CD4-positive, alpha-beta memory T cell (primary cell): ENCODE measurements at regions of chr19 and their contacts with region 1.

Region 1: GRCh38 chr19:17932485-17933338 is at the start of gene CCDC124:
- DNase-seq: peak; percentile 93 to 95 (median 95)
- H3K4me3 ChIP-seq: peak within 1 kb of the TSS; percentile 63 to 73
- H3K4me3 Mint-ChIP-seq: peak within 1 kb of the TSS; percentile 89 to 98 (median 92)
- H3K27ac ChIP-seq: peak within 1 kb of the TSS; percentile 96
- H3K27ac Mint-ChIP-seq: peak within 1 kb of the TSS; percentile 92 to 99 (median 98)
- H3K4me1 ChIP-seq: peaks cover 19% of the 10 kb centered on the region
- H3K4me1 Mint-ChIP-seq: peaks cover 7 to 24% (median 14%) of the 10 kb centered on the region in 4 donors
- H3K27me3 ChIP-seq: no peaks in the 10 kb centered on the region
- H3K27me3 Mint-ChIP-seq: no peaks in the 10 kb centered on the region
- total RNA-seq, gene CCDC124: 30.0 to 34.2 TPM

Region 2: DNA sequence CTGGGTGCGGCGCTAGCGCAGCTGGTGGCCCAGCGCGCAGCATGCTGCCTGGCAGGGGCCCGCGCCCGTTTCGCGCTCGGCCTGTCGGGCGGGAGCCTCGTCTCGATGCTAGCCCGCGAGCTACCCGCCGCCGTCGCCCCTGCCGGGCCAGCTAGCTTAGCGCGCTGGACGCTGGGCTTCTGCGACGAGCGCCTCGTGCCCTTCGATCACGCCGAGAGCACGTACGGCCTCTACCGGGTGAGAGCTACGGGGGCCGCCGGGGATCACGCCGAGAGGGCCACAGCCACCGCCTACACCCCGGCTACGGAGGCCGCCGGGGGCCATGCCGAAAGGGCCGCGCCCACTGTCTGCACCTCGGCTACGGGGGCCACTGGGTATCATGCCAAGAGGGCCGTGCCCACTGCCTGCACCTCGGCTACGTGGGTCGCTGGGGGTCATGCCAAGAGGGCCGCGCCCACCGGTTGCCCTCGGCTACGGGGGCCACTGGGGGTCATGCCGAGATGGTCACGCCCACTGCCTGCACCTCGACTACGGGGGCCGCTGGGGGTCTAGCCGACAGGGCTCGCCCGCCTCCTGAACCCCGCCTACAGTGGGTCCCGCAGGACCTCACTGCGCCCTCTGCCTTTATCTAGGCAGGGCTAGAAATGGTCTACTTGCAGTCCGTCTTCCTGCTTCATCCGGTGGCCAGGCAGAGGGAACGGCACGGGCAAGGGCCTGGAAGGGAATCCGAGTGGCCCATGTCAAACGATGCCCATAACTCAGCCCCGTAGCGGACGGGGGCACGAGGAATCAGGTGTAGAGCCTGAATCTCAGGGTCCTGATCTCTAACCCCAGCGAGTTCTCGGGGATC is 420.8 kb before region 1 on chr19:
- CTCF ChIA-PET with region 1: no interaction called
- POLR2A ChIA-PET with region 1: no interaction called
- intact Hi-C with region 1: loop called (anchors 5 kb)
- DNase-seq: peak; percentile 86 to 90 (median 88)
- H3K4me3 ChIP-seq: peak overlapping the region; percentile 50 to 96
- H3K4me3 Mint-ChIP-seq: peak overlapping the region; percentile 88 to 100 (median 98)
- H3K27ac ChIP-seq: peak overlapping the region; percentile 92
- H3K27ac Mint-ChIP-seq: peak overlapping the region; percentile 90 to 98 (median 95)
- H3K4me1 ChIP-seq: peaks cover 20% of the 10 kb centered on the region
- H3K4me1 Mint-ChIP-seq: peaks cover 17 to 47% (median 30%) of the 10 kb centered on the region in 4 donors
- H3K27me3 ChIP-seq: no peaks in the 10 kb centered on the region
- H3K27me3 Mint-ChIP-seq: no peaks in the 10 kb centered on the region

Region 3: GRCh38 chr19:17703824-17704463 is 228.8 kb before region 1 on chr19:
- CTCF ChIA-PET with region 1: interaction called, 10 read pairs
- POLR2A ChIA-PET with region 1: no interaction called
- intact Hi-C with region 1: no loop called
- DNase-seq: peak; percentile 62 to 71 (median 66)
- H3K4me3 ChIP-seq: no peak overlapping the region
- H3K4me3 Mint-ChIP-seq: no peak overlapping the region
- H3K27ac ChIP-seq: no peak overlapping the region
- H3K27ac Mint-ChIP-seq: peak overlapping the region in 2 of 7 donors; percentile 5 to 78
- H3K4me1 ChIP-seq: no peaks in the 10 kb centered on the region
- H3K4me1 Mint-ChIP-seq: peaks cover 0 to 2% (median 0%) of the 10 kb centered on the region in 4 donors
- H3K27me3 ChIP-seq: no peaks in the 10 kb centered on the region
- H3K27me3 Mint-ChIP-seq: peaks cover 3 to 10% of the 10 kb centered on the region in 2 donors

Region 4: GRCh38 chr19:17803264-17803922 is 129.3 kb before region 1 on chr19:
- CTCF ChIA-PET with region 1: interaction called, 3 read pairs
- POLR2A ChIA-PET with region 1: interaction called, 12 read pairs
- intact Hi-C with region 1: no loop called
- DNase-seq: peak; percentile 47 to 63 (median 57)
- H3K4me3 ChIP-seq: peak overlapping the region in 1 of 2 donors; percentile 28
- H3K4me3 Mint-ChIP-seq: peak overlapping the region; percentile 34 to 86 (median 78)
- H3K27ac ChIP-seq: no peak overlapping the region
- H3K27ac Mint-ChIP-seq: peak overlapping the region; percentile 80 to 94 (median 88)
- H3K4me1 ChIP-seq: peaks cover 43% of the 10 kb centered on the region
- H3K4me1 Mint-ChIP-seq: peaks cover 19 to 52% (median 32%) of the 10 kb centered on the region in 4 donors
- H3K27me3 ChIP-seq: no peaks in the 10 kb centered on the region
- H3K27me3 Mint-ChIP-seq: no peaks in the 10 kb centered on the region

Region 5: GRCh38 chr19:17847538-17848366 is 85.0 kb before region 1 on chr19 and contains the start of gene JAK3:
- CTCF ChIA-PET with region 1: interaction called, 306 read pairs
- POLR2A ChIA-PET with region 1: interaction called, 20 read pairs
- intact Hi-C with region 1: no loop called
- DNase-seq: peak; percentile 80 to 91 (median 84)
- H3K4me3 ChIP-seq: peak within 1 kb of the TSS; percentile 52 to 76
- H3K4me3 Mint-ChIP-seq: peak within 1 kb of the TSS; percentile 91 to 98 (median 94)
- H3K27ac ChIP-seq: peak within 1 kb of the TSS; percentile 91
- H3K27ac Mint-ChIP-seq: peak within 1 kb of the TSS; percentile 95 to 98 (median 97)
- H3K4me1 ChIP-seq: peaks cover 76% of the 10 kb centered on the region
- H3K4me1 Mint-ChIP-seq: peaks cover 39 to 80% (median 59%) of the 10 kb centered on the region in 4 donors
- H3K27me3 ChIP-seq: no peaks in the 10 kb centered on the region
- H3K27me3 Mint-ChIP-seq: no peaks in the 10 kb centered on the region
- total RNA-seq, gene JAK3: 132 to 135 TPM

Region 6: DNA sequence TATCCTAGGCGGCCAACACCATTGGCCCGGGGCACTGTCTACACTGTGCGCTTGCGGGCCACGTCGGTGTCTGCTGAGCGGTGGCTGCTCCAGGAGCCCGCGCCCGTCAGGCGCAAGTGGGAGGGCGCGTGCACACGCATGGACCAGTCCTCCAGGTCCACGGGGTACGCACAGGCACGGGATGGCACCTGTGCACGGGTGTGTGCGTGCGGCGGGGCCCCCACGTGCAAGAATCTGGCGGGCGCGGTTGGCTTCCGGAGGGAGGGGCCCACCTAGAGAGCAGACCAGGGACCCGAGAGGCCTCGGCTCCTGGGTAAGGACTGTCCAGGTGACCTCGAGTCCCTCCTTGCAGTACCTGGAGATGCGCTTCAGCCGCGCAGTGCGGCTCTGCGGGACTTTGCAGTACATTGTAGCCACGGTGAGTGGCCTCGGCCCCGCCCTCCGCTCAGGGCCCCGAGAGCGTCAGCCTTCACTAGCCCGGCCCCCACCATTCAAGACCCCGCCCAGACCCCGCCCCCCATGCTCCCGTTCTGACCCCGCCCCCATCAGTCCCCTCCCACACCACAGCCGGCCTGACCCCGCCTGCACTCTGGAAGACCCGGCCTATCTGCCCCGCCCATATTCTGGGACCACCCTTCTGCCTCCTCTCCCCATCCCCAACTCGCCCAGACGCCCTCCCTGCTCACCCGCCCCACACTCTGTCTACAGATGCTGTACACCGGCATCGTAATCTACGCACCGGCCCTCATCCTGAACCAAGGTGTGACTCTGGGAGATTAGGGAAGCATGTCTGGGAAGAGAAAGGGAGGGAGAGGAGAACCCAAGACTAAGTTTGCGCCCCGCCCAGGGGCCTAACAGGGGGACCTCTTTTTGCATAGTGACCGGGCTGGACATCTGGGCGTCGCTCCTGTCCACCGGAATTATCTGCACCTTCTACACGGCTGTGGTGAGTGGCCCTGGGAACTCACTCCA is 58.6 kb before region 1 on chr19:
- CTCF ChIA-PET with region 1: interaction called, 10 read pairs
- POLR2A ChIA-PET with region 1: interaction called, 22 read pairs
- intact Hi-C with region 1: loop called (anchors 1 kb)
- DNase-seq: peak; percentile 62 to 71 (median 68)
- H3K4me3 ChIP-seq: peak overlapping the region in 1 of 2 donors; percentile 59
- H3K4me3 Mint-ChIP-seq: peak overlapping the region; percentile 75 to 87 (median 81)
- H3K27ac ChIP-seq: no peak overlapping the region
- H3K27ac Mint-ChIP-seq: peak overlapping the region; percentile 46 to 92 (median 83)
- H3K4me1 ChIP-seq: peaks cover 26% of the 10 kb centered on the region
- H3K4me1 Mint-ChIP-seq: peaks cover 3 to 26% (median 11%) of the 10 kb centered on the region in 4 donors
- H3K27me3 ChIP-seq: no peaks in the 10 kb centered on the region
- H3K27me3 Mint-ChIP-seq: no peaks in the 10 kb centered on the region

Region 7: DNA sequence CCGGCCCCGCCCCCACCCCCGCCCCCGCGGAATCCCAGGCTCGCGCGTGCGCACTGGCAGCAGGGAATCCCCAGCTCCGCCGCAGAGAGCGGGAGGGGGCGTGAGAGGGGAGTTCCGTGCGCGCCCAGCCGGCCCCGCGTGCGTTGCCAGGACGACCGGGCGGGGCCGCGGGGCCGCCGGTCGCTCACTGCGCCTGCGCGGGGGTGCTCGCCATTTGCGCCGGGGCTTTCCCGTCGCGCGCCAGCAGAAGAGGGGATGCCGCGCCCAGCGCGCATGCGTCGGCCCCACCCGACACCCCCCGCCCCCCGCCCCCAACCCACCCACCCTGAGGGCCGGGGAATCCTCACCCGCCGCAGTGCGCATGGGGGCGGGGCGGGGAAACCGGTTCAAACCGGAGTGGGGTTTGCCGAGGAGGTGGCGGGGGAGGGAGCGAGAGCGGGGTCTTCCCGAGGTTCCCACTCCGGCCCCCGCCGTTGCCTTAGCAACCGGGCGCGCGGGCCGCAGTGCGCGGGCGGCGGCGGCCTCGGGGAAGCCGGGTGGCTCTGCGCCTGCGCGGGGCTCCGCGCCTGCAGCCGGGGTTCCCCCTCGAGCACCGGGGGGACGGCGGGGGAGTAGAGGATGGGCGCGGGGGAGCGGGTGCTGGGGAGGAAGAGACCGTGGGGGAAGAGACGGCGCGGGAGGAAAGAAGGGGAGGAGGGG is 15.3 kb after region 1 on chr19:
- CTCF ChIA-PET with region 1: interaction called, 65 read pairs
- POLR2A ChIA-PET with region 1: interaction called, 29 read pairs
- intact Hi-C with region 1: loop called (anchors 1 kb)
- DNase-seq: peak; percentile 94 to 97 (median 96)
- H3K4me3 ChIP-seq: peak overlapping the region in 1 of 2 donors; percentile 43
- H3K4me3 Mint-ChIP-seq: peak overlapping the region; percentile 54 to 90 (median 80)
- H3K27ac ChIP-seq: peak overlapping the region; percentile 100
- H3K27ac Mint-ChIP-seq: peak overlapping the region; percentile 64 to 99 (median 84)
- H3K4me1 ChIP-seq: peaks cover 52% of the 10 kb centered on the region
- H3K4me1 Mint-ChIP-seq: peaks cover 25 to 62% (median 41%) of the 10 kb centered on the region in 4 donors
- H3K27me3 ChIP-seq: peaks cover 25% of the 10 kb centered on the region
- H3K27me3 Mint-ChIP-seq: peaks cover 21 to 27% of the 10 kb centered on the region in 2 donors